HepG2 (cell line): ENCODE measurements at regions of chr16 and their contacts with region 1.

Region 1: DNA sequence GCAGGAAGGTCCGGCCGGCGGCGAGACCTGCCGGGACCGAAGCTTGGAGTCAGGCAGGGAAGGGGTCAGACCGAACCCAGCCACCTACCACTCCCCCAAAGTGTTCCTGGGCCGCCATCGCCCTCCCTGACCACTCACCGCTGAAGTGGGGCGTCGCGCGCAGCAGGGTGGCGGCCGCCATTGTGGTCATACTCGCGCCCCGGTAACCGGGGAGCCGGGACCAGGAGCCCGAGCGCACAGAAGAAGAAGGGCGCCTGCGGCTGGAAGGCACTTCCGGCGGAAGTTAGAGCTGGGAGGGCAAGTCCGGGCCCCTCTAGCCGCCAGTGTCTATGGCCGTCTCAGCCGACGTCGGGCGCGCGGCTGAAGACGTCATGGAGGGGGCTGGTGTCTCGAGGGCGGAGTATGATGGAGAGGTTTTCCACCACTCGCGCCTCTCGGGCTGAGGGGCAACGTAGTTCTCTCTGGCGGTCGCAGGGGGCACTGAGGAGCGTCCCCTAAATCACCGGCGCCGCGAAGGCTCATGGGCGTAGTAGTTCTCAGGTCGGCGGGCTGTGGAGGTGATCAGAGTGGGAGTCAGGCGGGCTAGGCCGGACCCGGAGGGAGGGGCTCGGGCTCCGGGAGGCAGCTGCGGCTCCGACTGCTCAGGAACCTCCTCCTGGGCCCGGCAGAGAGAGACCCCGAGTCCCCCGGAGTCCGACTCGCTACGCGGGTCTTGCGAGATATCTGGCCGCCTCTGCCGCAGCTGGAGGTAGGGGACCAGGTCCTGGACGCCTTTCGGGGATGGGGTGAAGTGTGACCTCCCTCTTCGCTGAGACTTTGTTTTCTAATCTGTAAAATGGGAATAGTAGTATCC is at the start of gene TUFM:
- DNase-seq: peak; percentile 99
- ATAC-seq: peak; percentile 87
- H3K4me3 ChIP-seq: peak within 1 kb of the TSS; percentile 75 to 97 (median 87)
- H3K27ac ChIP-seq: peak within 1 kb of the TSS; percentile 69
- H3K4me1 ChIP-seq: peaks cover 18% of the 10 kb centered on the region
- H3K27me3 ChIP-seq: no peaks in the 10 kb centered on the region; a peak in 1 of 5 replicates
- CTCF ChIP-seq: peak; percentile 98
- EP300 ChIP-seq: peak; percentile 47 to 73; a peak in 3 of 4 replicates
- POLR2A ChIP-seq: peak; percentile 58 to 66; a peak in 3 of 4 replicates
- RAD21 ChIP-seq: peak; percentile 47
- total RNA-seq, gene TUFM: 138 and 298 TPM in 2 replicates

Region 2: GRCh38 chr16:28835867-28836744 is 10.2 kb before region 1 on chr16:
- CTCF ChIA-PET with region 1: no interaction called
- POLR2A ChIA-PET with region 1: interaction called, 56 read pairs
- in situ Hi-C with region 1: no loop called
- intact Hi-C with region 1: no loop called
- DNase-seq: no peak
- ATAC-seq: peak; percentile 2; the same call in 2 of the 3 replicates
- H3K4me3 ChIP-seq: no peak overlapping the region
- H3K27ac ChIP-seq: no peak overlapping the region
- H3K4me1 ChIP-seq: peaks cover 20% of the 10 kb centered on the region
- H3K27me3 ChIP-seq: no peaks in the 10 kb centered on the region
- CTCF ChIP-seq: no peak
- EP300 ChIP-seq: no peak
- POLR2A ChIP-seq: peak; percentile 12 to 41; a peak in 2 of 4 replicates
- RAD21 ChIP-seq: no peak

Region 3: GRCh38 chr16:28898266-28898665 is 52.0 kb after region 1 on chr16:
- CTCF ChIA-PET with region 1: no interaction called
- POLR2A ChIA-PET with region 1: no interaction called
- in situ Hi-C with region 1: no loop called
- intact Hi-C with region 1: no loop called
- DNase-seq: no peak
- ATAC-seq: no peak
- H3K4me3 ChIP-seq: no peak overlapping the region
- H3K27ac ChIP-seq: no peak overlapping the region
- H3K4me1 ChIP-seq: peaks cover 13% of the 10 kb centered on the region
- H3K27me3 ChIP-seq: no peaks in the 10 kb centered on the region
- CTCF ChIP-seq: no peak
- EP300 ChIP-seq: no peak
- POLR2A ChIP-seq: no peak
- RAD21 ChIP-seq: no peak

Region 4: DNA sequence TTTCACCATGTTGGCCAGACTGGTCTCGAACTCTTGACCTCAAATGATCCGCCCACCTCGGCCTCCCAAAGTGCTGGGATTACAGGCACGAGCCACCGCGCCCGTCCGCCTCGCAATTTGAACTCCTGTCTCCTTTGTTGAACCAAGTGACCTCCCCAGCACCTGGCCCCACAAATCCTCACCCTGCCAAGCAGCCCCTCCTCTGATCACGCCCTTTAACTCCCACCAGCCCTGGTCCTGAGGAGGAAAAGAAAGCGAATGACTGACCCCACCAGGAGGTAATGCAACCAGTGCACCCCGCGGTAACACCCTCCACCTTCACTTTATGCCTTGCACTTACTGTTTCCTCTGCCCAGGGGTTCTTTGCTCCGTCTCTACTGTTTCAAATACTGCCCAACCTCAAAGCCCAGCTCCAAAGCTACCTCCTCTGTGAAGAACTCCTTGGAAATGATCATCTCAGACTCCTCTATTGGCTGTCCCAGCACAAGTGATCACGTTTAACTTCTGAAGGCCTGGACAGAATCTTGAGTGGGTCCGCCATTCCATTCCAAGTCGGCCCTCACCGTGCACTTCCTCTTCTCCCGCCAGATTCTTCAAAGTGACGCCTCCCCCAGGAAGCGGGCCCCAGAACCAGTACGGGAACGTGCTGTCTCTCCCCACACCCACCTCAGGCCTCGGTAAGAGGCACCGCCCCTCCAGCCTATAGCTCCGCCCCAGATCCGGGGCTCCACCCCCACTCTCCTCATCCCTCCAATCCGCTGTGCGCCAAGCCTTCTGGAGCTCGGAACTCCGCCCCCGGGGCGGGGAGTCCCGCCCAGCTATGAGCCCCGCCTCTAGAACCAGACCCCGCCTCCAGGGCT is 89.8 kb after region 1 on chr16:
- CTCF ChIA-PET with region 1: no interaction called
- POLR2A ChIA-PET with region 1: interaction called, 13 read pairs
- in situ Hi-C with region 1: no loop called
- intact Hi-C with region 1: no loop called
- DNase-seq: peak; percentile 88
- ATAC-seq: peak; percentile 93
- H3K4me3 ChIP-seq: peak overlapping the region; percentile 28 to 69 (median 40)
- H3K27ac ChIP-seq: peak overlapping the region; percentile 43
- H3K4me1 ChIP-seq: peaks cover 63% of the 10 kb centered on the region
- H3K27me3 ChIP-seq: no peaks in the 10 kb centered on the region
- CTCF ChIP-seq: peak; percentile 47
- EP300 ChIP-seq: no peak
- POLR2A ChIP-seq: peak; percentile 19 to 40; a peak in 1 of 4 replicates
- RAD21 ChIP-seq: no peak

Region 5: DNA sequence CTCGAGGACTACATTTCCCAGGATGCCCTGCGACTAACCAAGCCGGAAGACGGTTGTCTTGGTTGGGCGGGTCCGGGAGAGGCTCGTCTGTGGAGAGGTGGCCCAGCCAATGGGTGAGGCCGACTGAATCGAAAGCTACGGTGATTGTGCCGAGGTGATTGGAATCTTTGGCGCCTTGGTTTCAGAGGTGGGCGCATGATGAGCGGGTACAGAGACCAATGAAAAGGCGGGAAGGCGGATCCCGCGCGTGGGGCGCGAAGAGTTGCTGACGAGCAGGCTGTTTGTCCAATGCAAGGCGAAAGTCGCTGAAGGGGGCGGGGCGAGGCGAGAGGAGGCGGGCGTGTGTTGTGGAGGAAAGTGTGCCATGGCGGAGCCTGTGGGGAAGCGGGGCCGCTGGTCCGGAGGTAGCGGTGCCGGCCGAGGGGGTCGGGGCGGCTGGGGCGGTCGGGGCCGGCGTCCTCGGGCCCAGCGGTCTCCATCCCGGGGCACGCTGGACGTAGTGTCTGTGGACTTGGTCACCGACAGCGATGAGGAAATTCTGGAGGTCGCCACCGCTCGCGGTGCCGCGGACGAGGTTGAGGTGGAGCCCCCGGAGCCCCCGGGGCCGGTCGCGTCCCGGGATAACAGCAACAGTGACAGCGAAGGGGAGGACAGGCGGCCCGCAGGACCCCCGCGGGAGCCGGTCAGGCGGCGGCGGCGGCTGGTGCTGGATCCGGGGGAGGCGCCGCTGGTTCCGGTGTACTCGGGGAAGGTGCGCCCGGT is 104.5 kb after region 1 on chr16 and contains the start of gene NFATC2IP:
- CTCF ChIA-PET with region 1: interaction called, 3 read pairs
- POLR2A ChIA-PET with region 1: interaction called, 12 read pairs
- in situ Hi-C with region 1: no loop called
- intact Hi-C with region 1: loop called (anchors 1 kb)
- DNase-seq: peak; percentile 100
- ATAC-seq: peak; percentile 97
- H3K4me3 ChIP-seq: peak within 1 kb of the TSS; percentile 93 to 99 (median 97)
- H3K27ac ChIP-seq: peak within 1 kb of the TSS; percentile 67
- H3K4me1 ChIP-seq: peaks cover 49% of the 10 kb centered on the region
- H3K27me3 ChIP-seq: no peaks in the 10 kb centered on the region; a peak in 1 of 5 replicates
- CTCF ChIP-seq: no peak
- EP300 ChIP-seq: no peak
- POLR2A ChIP-seq: peak; percentile 63 to 89
- RAD21 ChIP-seq: peak; percentile 28; the same call in 1 of the 2 replicates
- total RNA-seq, gene NFATC2IP: 18.2 and 32.1 TPM in 2 replicates